Left cardiac atrium (tissue), 4 donors: ENCODE measurements at regions of chr19 and their contacts with region 1.

Region 1: GRCh38 chr19:30682999-30683536 is 310.9 kb downstream of the ZNF536 start:
- DNase-seq: peak; percentile 69
- ATAC-seq: peak; percentile 83 to 85

Region 2: GRCh38 chr19:31548941-31549340 is 865.9 kb after region 1 on chr19:
- intact Hi-C with region 1: loop called in 1 of 2 experiments (anchors 5 kb)
- DNase-seq: no peak
- ATAC-seq: no peak

Region 3: DNA sequence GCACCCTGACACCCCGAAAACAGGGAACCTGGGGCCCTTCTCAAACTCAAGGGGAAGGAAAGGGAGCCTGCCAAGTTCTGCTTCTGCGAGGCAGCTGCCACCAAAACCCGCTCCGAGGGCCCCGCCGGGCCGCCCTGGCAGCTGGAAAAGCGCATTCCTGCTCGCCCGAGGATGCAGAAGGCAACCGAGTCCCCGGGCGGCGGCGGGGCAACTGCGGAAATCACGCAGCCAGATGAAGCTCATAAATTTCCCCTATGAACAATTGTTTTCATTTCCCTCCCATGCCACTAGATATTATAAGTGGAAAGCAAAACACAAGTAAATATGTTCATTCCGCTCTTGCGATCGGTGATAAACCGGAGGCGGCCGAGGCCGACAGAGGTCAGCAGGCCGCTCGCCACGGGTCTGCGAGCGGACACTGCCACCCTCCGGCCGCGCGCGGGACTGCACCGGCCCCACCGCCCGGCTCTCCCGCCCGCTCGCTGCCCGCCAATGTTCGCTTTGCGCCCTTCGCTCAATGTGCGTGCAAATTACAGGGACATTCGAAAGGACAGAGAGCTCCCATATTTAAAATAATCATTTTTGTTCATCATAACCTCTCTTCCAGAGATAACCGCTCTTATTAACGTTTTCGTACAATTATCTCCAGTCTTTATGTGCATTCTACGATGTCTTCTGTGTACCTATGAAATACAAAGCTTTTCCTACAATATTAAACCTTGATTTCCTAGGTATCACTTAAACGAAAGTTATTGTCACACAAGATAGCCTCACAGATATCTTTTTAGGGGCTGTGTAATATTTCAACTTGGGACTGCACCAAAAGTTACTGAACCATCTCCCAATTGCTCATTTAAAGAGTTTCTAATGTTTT is 1541.5 kb after region 1 on chr19:
- intact Hi-C with region 1: loop called (anchors 2 to 5 kb)
- DNase-seq: peak; percentile 70
- ATAC-seq: peak; percentile 84 to 95

Region 4: GRCh38 chr19:32566246-32566830 is 1883.3 kb after region 1 on chr19:
- intact Hi-C with region 1: loop called in 1 of 2 experiments (anchors 5 kb)
- DNase-seq: no peak
- ATAC-seq: no peak